Activated CD4-positive, alpha-beta memory T cell treated with anti-CD3 and anti-CD28 coated beads, Interleukin-2, amount 10 ng/mL, durations not matched to agents 7 days and 5 days (primary cell): ENCODE measurements at regions of chr6 and their contacts with region 1.

Region 1: GRCh38 chr6:135180542-135181332 is at the start of gene MYB:
- DNase-seq: peak; percentile 83
- H3K4me3 Mint-ChIP-seq: peak within 1 kb of the TSS; percentile 86
- H3K27ac Mint-ChIP-seq: peak within 1 kb of the TSS; percentile 93
- H3K4me1 Mint-ChIP-seq: peaks cover 36% of the 10 kb centered on the region
- H3K27me3 Mint-ChIP-seq: no peaks in the 10 kb centered on the region
- total RNA-seq, gene MYB: 27.7 to 30.3 TPM

Region 2: GRCh38 chr6:135054569-135055498 is 125.9 kb before region 1 on chr6 and contains the start of gene HBS1L:
- CTCF ChIA-PET with region 1: interaction called, 16 read pairs
- POLR2A ChIA-PET with region 1: interaction called, 33 read pairs
- DNase-seq: peak; percentile 97
- H3K4me3 Mint-ChIP-seq: peak within 1 kb of the TSS; percentile 90
- H3K27ac Mint-ChIP-seq: peak within 1 kb of the TSS; percentile 94
- H3K4me1 Mint-ChIP-seq: peaks cover 40% of the 10 kb centered on the region
- H3K27me3 Mint-ChIP-seq: no peaks in the 10 kb centered on the region
- total RNA-seq, gene HBS1L: 90.3 to 91.6 TPM

Region 3: DNA sequence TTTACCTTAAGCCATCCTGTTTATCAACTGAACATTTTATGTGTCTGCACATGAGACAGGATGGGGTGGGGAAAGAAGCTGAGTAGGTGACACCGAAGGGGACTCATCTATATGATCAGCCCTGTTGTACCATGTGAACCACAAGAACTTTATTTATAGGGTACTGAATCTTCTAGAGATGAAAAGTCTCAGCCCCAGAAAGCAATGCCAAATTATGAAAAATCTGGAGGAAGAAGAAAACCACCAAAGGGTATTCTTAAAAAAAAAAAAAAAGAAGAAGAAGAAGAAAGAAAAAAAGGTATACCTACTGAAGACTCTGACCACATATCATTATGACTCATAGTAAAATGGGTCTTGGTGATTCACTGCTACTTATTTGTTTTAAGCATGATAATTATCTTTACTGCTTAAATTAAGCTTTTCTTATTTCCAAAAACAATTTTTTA is 86.3 kb before region 1 on chr6:
- CTCF ChIA-PET with region 1: interaction called, 29 read pairs
- POLR2A ChIA-PET with region 1: interaction called, 75 read pairs
- DNase-seq: peak; percentile 37
- H3K4me3 Mint-ChIP-seq: peak overlapping the region; percentile 38
- H3K27ac Mint-ChIP-seq: peak overlapping the region; percentile 92
- H3K4me1 Mint-ChIP-seq: peaks cover 47% of the 10 kb centered on the region
- H3K27me3 Mint-ChIP-seq: no peaks in the 10 kb centered on the region

Region 4: DNA sequence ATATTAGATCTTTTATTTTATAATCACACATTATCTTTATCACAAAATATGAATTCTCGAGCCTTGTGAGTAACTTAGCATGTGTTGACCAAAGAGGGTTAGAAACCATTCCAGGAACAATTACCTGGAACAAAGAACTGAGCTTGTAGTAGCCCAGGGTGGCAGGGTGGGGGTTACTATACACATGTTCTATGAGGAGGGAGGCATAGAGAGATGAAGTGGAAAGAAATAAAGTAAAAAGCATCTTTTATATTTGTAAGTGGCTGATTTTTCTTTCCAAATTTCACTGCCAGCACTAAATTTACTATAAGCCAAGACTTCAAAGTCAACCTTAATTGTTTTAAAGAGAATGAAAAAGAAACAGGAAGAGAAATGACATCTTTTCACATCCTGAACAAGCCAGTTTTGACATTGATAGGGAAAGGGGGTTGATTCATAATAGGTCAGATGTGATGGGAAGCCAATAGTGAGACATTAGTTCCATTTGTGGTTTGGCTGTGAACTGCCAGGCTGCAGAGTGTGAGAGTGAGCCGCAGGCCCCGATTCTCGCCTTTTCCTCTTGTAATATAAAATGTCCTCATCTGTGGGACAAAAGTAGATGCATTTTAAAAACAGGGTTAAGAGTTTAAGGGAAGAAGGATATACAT is 52.3 kb before region 1 on chr6:
- CTCF ChIA-PET with region 1: interaction called, 8 read pairs
- POLR2A ChIA-PET with region 1: interaction called, 18 read pairs
- DNase-seq: peak; percentile 74
- H3K4me3 Mint-ChIP-seq: peak overlapping the region; percentile 47
- H3K27ac Mint-ChIP-seq: peak overlapping the region; percentile 96
- H3K4me1 Mint-ChIP-seq: peaks cover 41% of the 10 kb centered on the region
- H3K27me3 Mint-ChIP-seq: no peaks in the 10 kb centered on the region

Region 5: GRCh38 chr6:135162678-135163439 is 17.9 kb before region 1 on chr6:
- CTCF ChIA-PET with region 1: interaction called, 18 read pairs
- POLR2A ChIA-PET with region 1: interaction called, 31 read pairs
- DNase-seq: peak; percentile 56
- H3K4me3 Mint-ChIP-seq: peak overlapping the region; percentile 43
- H3K27ac Mint-ChIP-seq: peak overlapping the region; percentile 90
- H3K4me1 Mint-ChIP-seq: peaks cover 61% of the 10 kb centered on the region
- H3K27me3 Mint-ChIP-seq: no peaks in the 10 kb centered on the region

Region 6: GRCh38 chr6:135212020-135212806 is 31.5 kb after region 1 on chr6:
- CTCF ChIA-PET with region 1: interaction called, 6 read pairs
- POLR2A ChIA-PET with region 1: interaction called, 14 read pairs
- DNase-seq: peak; percentile 41
- H3K4me3 Mint-ChIP-seq: peak overlapping the region; percentile 7
- H3K27ac Mint-ChIP-seq: peak overlapping the region; percentile 77
- H3K4me1 Mint-ChIP-seq: peaks cover 42% of the 10 kb centered on the region
- H3K27me3 Mint-ChIP-seq: no peaks in the 10 kb centered on the region

Region 7: GRCh38 chr6:135310291-135310690 is 129.6 kb after region 1 on chr6:
- CTCF ChIA-PET with region 1: no interaction called
- POLR2A ChIA-PET with region 1: no interaction called
- DNase-seq: no peak
- H3K4me3 Mint-ChIP-seq: no peak overlapping the region
- H3K27ac Mint-ChIP-seq: no peak overlapping the region
- H3K4me1 Mint-ChIP-seq: peaks cover 5% of the 10 kb centered on the region
- H3K27me3 Mint-ChIP-seq: no peaks in the 10 kb centered on the region